GM23248 (cell line): ENCODE measurements at regions of chr17 and their contacts with region 1.

Region 1: DNA sequence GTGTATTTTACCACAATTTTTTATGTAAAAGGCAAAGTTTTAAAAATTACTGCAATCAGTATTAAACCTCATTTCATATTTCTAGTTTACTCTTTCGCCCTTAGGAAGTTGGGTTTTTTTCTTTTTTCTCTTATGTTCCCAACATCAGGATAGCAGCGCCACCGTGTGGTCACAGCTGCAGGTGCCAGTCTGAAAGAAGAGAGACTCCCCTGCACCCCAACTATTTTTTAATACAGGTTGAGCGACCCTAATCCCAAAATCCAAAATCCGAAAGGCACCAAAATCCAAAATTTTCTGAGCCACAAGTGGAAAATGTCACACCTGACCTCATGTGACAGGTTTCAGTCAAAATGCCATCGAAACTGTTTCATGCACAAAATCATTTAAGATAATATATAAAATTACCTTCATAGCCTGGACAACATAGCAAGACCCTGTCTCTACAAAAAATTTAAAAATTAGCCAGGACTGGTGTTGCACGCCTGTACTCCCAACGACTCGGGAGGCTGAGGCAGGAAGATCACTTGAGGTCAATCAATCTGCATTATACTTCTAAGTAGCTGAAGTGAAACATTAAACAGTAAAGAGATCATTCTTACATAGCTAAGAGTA is 21.8 kb upstream of the ASGR2 start:
- DNase-seq: peak; percentile 83
- H3K4me3 ChIP-seq: peak overlapping the region; percentile 32
- H3K27ac ChIP-seq: no peak overlapping the region
- H3K4me1 ChIP-seq: no peaks in the 10 kb centered on the region
- H3K27me3 ChIP-seq: peaks cover 33% of the 10 kb centered on the region

Region 2: DNA sequence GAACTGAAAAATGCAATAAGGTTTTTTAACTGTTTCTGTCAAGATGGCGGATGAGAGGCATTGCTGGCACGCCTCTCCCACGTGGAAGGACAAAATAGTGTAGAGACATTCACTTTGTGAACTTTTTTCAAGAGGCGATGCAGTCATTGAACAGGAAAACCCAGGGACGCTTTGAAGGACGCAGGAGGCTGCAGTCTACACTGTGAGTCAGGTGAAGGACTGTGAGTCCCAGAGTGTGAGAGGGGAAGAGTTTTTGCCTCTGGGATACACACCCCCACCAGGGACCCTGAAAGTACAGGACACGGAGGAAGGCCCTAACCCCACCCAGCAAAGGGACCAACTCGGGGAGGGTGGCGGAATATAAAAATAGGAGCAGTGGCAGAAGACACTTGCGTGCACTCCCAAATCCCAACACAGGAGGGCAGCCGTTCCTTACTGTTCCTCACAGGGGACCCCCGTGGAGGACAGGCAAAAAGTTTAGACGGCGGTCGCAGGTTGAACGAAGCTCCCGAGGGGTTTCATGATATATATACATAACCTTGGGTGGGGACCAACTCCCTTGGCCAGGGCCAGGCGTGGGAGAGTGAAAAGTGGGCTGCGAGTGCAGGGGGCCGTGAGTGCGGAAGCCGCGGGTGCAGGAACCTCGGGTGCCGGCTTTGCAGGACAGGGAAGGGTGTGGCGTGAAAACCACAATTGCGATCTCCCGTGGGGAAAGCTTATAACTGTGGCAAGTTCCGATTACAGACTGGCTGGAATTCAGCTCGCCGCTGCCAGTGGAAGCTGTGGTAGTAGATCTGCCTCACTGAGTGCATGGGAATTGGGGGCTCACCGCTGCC is 222.5 kb before region 1 on chr17:
- in situ Hi-C with region 1: loop called (anchors 25 kb)
- DNase-seq: peak; percentile 74
- H3K4me3 ChIP-seq: no peak overlapping the region
- H3K27ac ChIP-seq: no peak overlapping the region
- H3K4me1 ChIP-seq: no peaks in the 10 kb centered on the region
- H3K27me3 ChIP-seq: no peaks in the 10 kb centered on the region

Region 3: DNA sequence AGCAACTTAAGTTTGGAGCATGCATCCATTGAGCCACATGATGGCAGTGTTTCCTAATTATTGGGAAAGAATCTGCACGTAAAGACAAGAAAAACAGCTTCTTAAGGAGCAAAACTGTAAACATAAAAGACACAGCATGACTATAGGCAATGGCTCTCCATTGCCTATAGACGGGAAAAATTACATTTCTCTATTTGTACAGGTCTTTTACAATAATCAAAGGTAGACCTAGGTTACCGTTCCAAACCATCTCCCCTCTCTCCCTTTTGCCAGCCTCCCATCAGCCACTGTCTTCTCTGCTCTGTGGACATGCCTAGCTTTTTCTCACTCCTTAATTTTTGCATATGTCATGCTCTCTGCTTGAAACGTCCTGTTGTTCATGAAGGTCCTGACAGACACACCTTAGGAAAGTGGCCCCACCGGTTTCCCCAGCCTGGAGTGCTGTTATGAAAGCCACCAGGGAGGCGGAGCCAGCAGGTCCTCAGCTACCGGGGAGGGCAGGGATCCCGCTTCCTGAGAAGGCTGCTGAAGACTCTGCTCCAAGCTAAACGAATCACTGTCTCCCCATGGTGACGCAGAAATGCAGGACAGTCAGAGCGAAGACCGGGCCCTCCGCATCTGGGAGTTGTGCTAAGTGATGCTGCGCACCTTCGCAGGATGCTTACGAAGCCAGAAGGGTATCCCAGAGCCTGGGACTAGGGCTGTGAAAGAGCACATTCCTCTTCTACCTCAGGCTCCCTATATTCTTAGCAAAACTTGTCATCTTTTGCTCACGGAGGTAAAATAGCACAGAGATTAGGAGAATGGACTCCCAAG is 90.3 kb before region 1 on chr17:
- in situ Hi-C with region 1: loop called (anchors 5 kb)
- DNase-seq: peak; percentile 81
- H3K4me3 ChIP-seq: no peak overlapping the region
- H3K27ac ChIP-seq: no peak overlapping the region
- H3K4me1 ChIP-seq: peaks cover 3% of the 10 kb centered on the region
- H3K27me3 ChIP-seq: peaks cover 15% of the 10 kb centered on the region

Region 4: DNA sequence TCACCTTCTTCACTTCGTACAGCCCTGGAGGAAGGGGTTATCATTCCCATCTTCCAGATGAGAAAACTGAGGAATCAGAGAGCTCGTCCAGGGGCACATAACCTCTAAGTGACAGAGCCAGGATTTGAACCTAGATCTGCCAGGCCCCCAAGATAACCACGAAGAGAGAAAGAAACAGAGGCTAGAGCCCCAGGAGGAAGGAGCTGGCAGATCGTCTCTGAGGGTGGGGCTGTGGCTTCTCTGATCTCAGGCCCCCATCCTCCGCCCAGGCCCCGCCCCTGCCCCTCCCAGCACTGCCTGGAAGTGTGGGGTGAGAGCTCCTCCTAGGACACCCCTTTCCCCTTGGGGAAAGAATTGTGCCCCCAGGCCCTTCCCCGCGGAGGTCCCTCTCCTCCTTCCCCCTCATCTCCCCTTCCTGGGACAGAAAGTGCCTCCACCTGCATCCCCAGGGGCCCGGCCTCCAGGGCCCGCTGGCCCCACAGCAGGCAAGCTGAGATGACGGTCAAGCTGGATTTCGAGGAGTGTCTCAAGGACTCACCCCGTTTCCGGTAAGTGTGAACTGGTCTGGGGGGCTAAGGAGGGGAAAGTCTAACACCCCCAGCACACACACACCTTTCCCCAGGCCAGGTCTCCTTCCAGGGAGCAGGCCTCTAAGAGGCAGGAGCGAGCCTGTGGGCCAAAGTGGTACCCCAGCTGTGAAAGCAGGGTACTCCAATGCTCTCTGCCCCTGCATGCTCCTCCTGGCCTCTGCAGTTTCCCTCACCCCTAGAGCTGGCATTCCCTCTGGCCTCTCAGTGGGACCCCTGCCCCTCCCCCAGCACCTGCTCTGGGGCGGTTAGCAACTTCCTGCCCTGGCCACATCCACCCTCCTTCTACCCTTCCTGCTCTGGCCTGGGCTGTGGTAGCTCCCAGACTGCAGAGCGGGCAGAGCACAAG is 200.1 kb after region 1 on chr17 and contains the start of gene ACAP1:
- in situ Hi-C with region 1: no loop called
- DNase-seq: no peak
- H3K4me3 ChIP-seq: no peak within 1 kb of the TSS
- H3K27ac ChIP-seq: no peak within 1 kb of the TSS
- H3K4me1 ChIP-seq: no peaks in the 10 kb centered on the region
- H3K27me3 ChIP-seq: 0 out of 2 replicates have a peak, but pooled peaks cover 3% of the 10 kb centered on the region
- total RNA-seq, gene ACAP1: 0.89 and 4.4 TPM in 2 replicates